SK-N-SH (cell line): ENCODE measurements at regions of chr12 and their contacts with region 1.

Region 1: GRCh38 chr12:9049520-9050133 is 60.3 kb downstream of the KLRG1 start:
- DNase-seq: peak; percentile 44
- H3K4me3 ChIP-seq: no peak overlapping the region
- H3K27ac ChIP-seq: no peak overlapping the region
- H3K4me1 ChIP-seq: peaks cover 0 to 3% of the 10 kb centered on the region in 2 experiments; a peak in 2 of 4 replicates
- H3K27me3 ChIP-seq: no peaks in the 10 kb centered on the region
- CTCF ChIP-seq: peak; percentile 73
- EP300 ChIP-seq: no peak
- RAD21 ChIP-seq: peak; percentile 61

Region 2: DNA sequence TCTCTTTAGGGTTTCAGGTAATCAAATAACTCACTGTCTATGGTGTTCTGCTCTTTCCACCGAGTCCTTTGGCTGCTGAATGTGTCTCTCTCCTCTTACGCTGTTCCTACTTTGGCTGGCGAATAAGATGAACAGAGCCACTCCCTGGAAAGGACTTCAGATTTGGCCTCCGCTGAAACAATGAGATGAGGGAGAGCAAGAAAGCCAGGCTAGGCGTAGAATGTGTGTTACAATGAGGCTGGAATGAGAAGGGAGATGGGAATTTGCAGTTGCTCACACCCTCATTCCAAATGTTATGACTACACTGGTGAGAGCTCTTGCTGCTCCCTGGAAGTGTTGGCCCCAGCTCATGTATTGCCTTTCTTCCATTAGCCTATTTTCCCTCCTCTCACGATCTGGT is 387.0 kb before region 1 on chr12 and contains the start of gene MFAP5:
- CTCF ChIA-PET with region 1: interaction called, 21 read pairs
- POLR2A ChIA-PET with region 1: no interaction called
- DNase-seq: no peak
- H3K4me3 ChIP-seq: no peak within 1 kb of the TSS
- H3K27ac ChIP-seq: no peak within 1 kb of the TSS; a peak in 1 of 4 replicates
- H3K4me1 ChIP-seq: no peaks in the 10 kb centered on the region
- H3K27me3 ChIP-seq: no peaks in the 10 kb centered on the region; the same call in 1 of the 2 replicates
- CTCF ChIP-seq: no peak
- EP300 ChIP-seq: no peak
- RAD21 ChIP-seq: no peak
- polyA plus RNA-seq, gene MFAP5: 19.1 and 34.8 TPM in 2 replicates

Region 3: DNA sequence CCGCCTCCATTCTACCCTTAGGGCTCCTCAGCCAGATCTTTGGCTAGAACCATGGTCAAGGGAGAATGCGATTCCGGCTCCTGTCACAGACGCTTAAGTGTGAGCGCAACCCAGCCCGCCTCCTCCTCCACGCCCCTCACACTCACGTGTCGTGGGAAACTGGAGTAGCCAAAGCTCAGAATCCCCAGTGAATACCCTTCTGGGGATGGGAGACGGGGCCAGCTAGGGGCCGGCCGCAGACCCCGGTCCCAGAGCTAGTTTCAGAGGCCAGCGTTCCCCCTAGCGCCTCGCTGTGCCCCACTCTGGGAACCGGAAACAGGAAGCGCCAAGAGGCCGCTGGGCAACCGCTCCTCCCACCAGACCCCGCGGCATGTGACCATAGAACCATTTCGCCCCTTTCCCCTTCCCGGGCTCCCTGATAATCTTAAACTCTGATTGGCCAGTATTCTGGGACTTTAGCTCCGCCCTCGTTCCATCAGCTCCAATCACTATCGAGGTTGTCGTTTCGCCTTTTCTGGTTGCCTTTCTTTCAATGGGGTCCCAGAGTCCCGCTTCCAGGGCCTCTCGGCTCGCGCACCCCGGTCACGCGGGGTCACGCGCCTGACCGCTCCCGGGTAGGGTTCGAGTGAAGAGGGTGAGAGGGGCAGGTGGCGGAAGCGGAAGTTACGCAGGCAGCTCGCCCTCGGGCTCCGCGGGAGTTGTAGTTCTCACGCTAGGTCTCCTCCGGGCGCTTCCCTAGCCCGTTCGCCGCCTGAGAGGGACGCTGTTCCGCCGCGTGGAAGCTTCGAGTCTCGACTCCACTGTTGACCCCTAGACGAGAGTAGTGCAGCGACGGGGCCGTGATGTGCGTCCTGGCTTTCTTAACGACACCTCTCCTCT is 100.0 kb before region 1 on chr12 and contains the start of gene M6PR:
- CTCF ChIA-PET with region 1: interaction called, 24 read pairs
- POLR2A ChIA-PET with region 1: interaction called, 3 read pairs
- DNase-seq: peak; percentile 90
- H3K4me3 ChIP-seq: peak within 1 kb of the TSS; percentile 97 to 99
- H3K27ac ChIP-seq: peak within 1 kb of the TSS; percentile 96 to 99
- H3K4me1 ChIP-seq: peaks cover 0 to 11% of the 10 kb centered on the region in 2 experiments; a peak in 3 of 4 replicates
- H3K27me3 ChIP-seq: no peaks in the 10 kb centered on the region
- CTCF ChIP-seq: peak; percentile 60
- EP300 ChIP-seq: no peak; a peak in 1 of 4 replicates
- RAD21 ChIP-seq: peak; percentile 55
- polyA plus RNA-seq, gene M6PR: 132 and 196 TPM in 2 replicates

Region 4: DNA sequence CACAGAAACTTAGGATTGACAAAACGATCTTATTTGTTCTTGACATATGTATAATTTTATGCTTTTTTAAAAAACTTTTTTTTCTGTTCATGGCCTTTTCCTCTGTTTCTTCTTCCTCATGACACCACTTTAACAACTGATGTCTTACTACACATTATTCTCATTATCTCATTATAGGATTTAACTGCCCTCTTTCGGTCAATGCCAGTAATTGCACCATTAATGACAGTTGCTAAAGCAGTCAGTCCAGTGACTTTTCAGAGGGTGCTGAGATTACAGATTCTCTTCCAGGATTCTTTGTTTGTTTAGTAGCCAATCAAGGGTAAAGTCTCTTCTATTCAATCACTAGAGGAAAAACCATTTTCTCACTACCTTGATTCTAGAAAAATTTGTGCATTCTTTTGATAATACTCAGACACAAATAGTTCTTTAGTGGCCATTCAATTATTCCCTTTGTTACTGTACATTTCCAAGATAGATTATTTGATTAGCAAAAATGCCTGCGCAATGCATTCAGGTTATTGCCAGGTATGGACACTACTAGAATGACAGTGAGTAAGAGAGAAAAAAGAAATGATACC is 10.1 kb before region 1 on chr12:
- CTCF ChIA-PET with region 1: interaction called, 22 read pairs
- POLR2A ChIA-PET with region 1: no interaction called
- DNase-seq: peak; percentile 69
- H3K4me3 ChIP-seq: no peak overlapping the region; a peak in 1 of 4 replicates
- H3K27ac ChIP-seq: no peak overlapping the region
- H3K4me1 ChIP-seq: no peaks in the 10 kb centered on the region
- H3K27me3 ChIP-seq: no peaks in the 10 kb centered on the region
- CTCF ChIP-seq: peak; percentile 79
- EP300 ChIP-seq: no peak
- RAD21 ChIP-seq: peak; percentile 81

Region 5: DNA sequence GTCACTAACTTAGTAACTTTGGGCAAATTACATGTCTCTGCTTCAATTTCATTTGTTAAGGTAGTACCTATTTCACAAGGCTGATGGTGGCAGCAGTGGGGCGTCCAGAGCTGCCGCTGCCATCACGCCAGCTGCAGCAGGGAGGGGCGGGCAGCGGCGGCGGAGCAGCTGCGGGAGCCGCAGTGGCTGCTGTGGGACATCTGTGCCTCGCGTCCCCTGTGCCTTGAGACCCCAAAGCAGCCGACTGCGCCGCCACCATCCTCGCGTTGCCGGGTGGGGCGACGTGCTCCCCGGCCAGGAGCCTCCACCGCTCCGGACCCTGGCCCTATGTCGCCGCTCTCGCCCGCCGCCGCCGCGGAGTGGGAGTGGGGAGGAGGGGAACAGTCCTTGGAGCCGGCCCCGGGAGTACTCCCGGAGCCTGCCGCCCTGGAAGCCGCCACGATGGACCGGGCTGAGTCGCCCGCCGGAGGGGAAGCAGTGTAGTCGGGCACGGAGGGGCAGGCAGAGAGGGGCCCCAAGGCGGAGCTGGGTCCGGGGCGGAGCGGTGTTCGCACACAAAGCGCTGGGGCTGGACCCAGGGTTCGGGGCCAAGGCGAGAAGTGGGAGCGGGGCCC is 14.7 kb after region 1 on chr12:
- CTCF ChIA-PET with region 1: interaction called, 27 read pairs
- POLR2A ChIA-PET with region 1: no interaction called
- DNase-seq: peak; percentile 86
- H3K4me3 ChIP-seq: peak overlapping the region; percentile 61
- H3K27ac ChIP-seq: no peak overlapping the region
- H3K4me1 ChIP-seq: no peaks in the 10 kb centered on the region; a peak in 1 of 4 replicates
- H3K27me3 ChIP-seq: no peaks in the 10 kb centered on the region
- CTCF ChIP-seq: peak; percentile 31; the same call in 1 of the 2 replicates
- EP300 ChIP-seq: no peak
- RAD21 ChIP-seq: peak; percentile 65

Region 6: DNA sequence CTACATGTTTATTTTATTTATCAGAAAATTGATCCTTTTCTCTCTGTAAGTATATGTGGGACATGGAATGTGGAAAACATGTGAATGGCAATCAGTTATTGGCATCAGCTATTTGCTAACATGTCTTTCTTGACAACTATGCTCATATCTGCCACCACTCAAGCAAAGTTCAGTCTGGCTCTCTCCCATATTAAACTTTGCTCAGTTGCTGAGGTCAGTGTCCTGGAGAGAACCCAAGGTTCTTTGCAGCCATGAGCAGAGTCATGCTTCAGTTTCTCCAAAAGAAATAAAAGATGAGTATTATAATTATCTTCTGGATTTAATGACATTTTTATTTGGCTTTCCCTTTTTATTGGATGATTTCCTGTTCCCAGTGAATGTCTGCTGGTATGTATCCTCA is 23.4 kb after region 1 on chr12:
- CTCF ChIA-PET with region 1: interaction called, 10 read pairs
- POLR2A ChIA-PET with region 1: no interaction called
- DNase-seq: no peak
- H3K4me3 ChIP-seq: no peak overlapping the region
- H3K27ac ChIP-seq: no peak overlapping the region
- H3K4me1 ChIP-seq: no peaks in the 10 kb centered on the region
- H3K27me3 ChIP-seq: no peaks in the 10 kb centered on the region
- CTCF ChIP-seq: no peak
- EP300 ChIP-seq: no peak
- RAD21 ChIP-seq: no peak

Region 7: GRCh38 chr12:9108504-9109212 is 59.0 kb after region 1 on chr12:
- CTCF ChIA-PET with region 1: no interaction called
- POLR2A ChIA-PET with region 1: no interaction called
- DNase-seq: no peak
- H3K4me3 ChIP-seq: no peak overlapping the region
- H3K27ac ChIP-seq: no peak overlapping the region
- H3K4me1 ChIP-seq: no peaks in the 10 kb centered on the region
- H3K27me3 ChIP-seq: no peaks in the 10 kb centered on the region
- CTCF ChIP-seq: no peak
- EP300 ChIP-seq: no peak
- RAD21 ChIP-seq: no peak

Region 8: GRCh38 chr12:9204380-9204779 is 154.8 kb after region 1 on chr12:
- CTCF ChIA-PET with region 1: no interaction called
- POLR2A ChIA-PET with region 1: no interaction called
- DNase-seq: no peak
- H3K4me3 ChIP-seq: no peak overlapping the region
- H3K27ac ChIP-seq: no peak overlapping the region
- H3K4me1 ChIP-seq: no peaks in the 10 kb centered on the region
- H3K27me3 ChIP-seq: no peaks in the 10 kb centered on the region
- CTCF ChIP-seq: no peak
- EP300 ChIP-seq: no peak
- RAD21 ChIP-seq: no peak

Region 9: DNA sequence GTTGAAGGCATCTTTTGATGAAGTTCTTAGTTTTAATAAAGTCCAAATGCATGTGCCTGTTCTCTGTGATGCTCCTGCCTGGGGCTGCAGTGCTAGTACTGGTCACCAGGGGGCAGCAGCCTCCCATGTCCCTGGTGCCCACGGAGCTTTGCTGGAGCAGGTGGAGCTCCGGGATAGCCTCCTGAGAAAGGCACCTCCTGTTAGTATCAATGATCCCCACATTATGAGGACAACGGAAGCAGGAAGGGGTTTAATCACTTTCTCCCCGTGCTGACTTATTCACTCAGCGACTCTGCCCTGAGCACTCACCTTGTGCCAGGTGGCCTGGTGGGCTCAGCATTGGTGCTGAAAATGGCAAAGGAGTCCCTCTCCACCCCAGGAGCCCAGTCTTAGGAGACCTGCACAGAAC is 281.6 kb after region 1 on chr12:
- CTCF ChIA-PET with region 1: no interaction called
- POLR2A ChIA-PET with region 1: no interaction called
- DNase-seq: peak; percentile 72
- H3K4me3 ChIP-seq: peak overlapping the region in 1 of 2 experiments; percentile 50; a peak in 1 of 4 replicates
- H3K27ac ChIP-seq: no peak overlapping the region
- H3K4me1 ChIP-seq: no peaks in the 10 kb centered on the region; a peak in 1 of 4 replicates
- H3K27me3 ChIP-seq: no peaks in the 10 kb centered on the region; the same call in 1 of the 2 replicates
- CTCF ChIP-seq: peak; percentile 93
- EP300 ChIP-seq: no peak
- RAD21 ChIP-seq: peak; percentile 92

Region 10: DNA sequence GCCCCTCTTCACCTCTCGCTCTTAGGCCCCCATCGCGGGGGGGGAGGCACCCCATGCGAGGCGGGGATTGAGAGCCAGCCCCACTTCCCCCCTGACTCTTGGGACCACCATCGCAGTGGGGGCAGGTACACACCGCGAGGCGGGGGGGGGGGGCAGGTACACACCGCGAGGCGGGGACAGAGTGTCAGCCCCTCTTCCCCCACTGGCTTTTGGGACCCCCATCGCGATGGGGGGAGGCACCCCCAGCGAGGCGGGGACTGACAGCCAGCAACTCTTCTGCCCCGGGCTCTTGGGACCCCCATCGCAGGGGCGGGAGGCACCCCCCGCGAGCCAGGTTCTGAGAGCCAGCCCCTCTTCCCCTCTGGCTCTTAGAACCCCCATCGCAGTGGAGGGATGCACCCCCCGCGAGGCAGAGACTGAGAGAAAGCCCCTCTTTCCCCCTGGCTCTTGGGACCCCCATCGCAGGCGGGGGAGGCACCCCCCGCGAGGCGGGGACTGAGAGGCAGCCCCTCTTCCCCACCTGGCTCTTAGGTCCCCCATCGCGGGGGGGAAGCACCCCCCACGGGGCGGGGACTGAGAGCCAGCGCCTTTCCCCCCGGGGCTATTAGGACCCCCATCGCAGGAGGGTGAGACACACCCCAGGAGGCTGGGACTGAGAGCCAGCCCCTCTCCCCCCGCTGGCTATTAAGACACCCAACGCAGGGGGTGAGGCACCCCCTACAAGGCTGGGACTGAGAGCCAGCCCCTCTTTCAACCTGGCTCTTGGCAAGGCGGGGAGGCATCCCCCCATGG is 355.0 kb after region 1 on chr12:
- CTCF ChIA-PET with region 1: no interaction called
- POLR2A ChIA-PET with region 1: no interaction called
- DNase-seq: peak; percentile 60
- H3K4me3 ChIP-seq: no peak overlapping the region
- H3K27ac ChIP-seq: no peak overlapping the region
- H3K4me1 ChIP-seq: no peaks in the 10 kb centered on the region
- H3K27me3 ChIP-seq: no peaks in the 10 kb centered on the region
- CTCF ChIP-seq: no peak
- EP300 ChIP-seq: no peak
- RAD21 ChIP-seq: no peak